MCF 10A (cell line): ENCODE measurements at regions of chr3 and their contacts with region 1.

Region 1: DNA sequence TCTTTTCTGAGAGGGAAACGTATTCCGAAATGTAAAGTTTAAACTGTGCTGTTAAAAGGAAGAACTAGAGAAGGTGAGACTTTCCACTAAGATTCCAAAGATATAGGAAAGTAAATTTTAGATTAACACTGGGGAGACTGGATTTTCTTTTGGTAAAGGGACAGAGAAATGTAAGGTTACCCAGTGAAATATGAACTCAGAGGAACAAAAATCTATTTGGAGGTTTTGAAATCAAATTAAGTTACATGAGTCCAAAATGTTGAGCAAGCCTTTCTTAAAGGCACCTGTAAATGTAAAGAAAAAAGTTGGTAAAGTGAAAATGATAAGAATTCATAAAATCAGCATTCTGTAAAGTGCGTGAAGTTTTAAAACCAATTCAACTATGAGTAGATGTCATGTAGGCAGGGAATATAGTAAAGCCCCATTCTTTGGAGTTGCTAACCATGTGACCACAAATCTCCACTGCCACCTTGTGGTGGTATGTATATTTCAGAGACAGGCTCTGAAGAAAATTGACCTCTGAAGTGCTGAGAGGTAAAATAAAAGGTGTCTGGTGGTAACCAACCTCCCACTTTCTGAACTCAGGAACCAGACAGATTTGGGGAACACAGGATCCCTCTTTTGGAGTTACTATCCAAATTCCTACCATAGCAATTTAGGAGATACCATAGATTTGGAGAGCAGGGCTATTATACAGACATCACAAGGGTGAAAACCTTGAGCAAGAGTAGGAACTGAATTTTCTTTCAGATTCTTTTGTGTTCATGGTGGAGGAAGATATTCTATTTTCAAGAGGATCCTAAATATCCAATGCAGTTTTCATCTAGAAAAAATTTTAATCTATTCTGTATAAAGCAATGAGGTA is 215.3 kb downstream of the ROBO2 start:
- DNase-seq: peak; percentile 68
- H3K4me3 Mint-ChIP-seq: no peak overlapping the region
- H3K27ac Mint-ChIP-seq: no peak overlapping the region
- H3K4me1 Mint-ChIP-seq: no peaks in the 10 kb centered on the region
- H3K27me3 Mint-ChIP-seq: peaks cover 92% of the 10 kb centered on the region
- CTCF ChIP-seq: peak; percentile 55

Region 2: DNA sequence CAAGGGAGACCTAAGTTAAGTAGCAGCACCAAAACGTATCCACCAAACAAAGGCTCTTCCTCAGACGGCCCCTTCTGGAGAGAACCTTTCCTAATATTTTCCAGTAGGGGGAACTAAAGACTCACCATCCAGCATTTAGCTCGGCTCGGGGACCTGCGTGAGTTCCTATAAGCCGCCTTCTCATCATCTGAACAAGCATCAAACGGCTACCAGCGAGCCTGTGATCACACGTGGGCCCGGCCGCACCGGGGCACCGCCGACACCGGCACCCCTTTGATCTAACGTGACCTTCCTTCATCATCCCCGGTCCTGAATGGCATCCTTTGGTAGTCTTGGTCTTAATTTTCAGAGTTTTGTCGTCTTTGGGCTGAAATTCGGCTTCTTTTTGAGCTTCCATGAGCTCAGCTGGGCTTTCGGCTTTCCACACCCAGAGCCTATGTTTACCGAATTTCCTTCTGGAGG is 216.7 kb before region 1 on chr3:
- CTCF ChIA-PET with region 1: interaction called, 25 read pairs
- POLR2A ChIA-PET with region 1: interaction called, 4 read pairs
- intact Hi-C with region 1: loop called (anchors 1 kb)
- DNase-seq: peak; percentile 79
- H3K4me3 Mint-ChIP-seq: peak overlapping the region; percentile 61
- H3K27ac Mint-ChIP-seq: no peak overlapping the region
- H3K4me1 Mint-ChIP-seq: peaks cover 10% of the 10 kb centered on the region
- H3K27me3 Mint-ChIP-seq: peaks cover 90% of the 10 kb centered on the region
- CTCF ChIP-seq: peak; percentile 65

Region 3: GRCh38 chr3:77244981-77245380 is 10.2 kb before region 1 on chr3:
- CTCF ChIA-PET with region 1: interaction called, 11 read pairs
- POLR2A ChIA-PET with region 1: interaction called, 3 read pairs
- intact Hi-C with region 1: no loop called
- DNase-seq: no peak
- H3K4me3 Mint-ChIP-seq: no peak overlapping the region
- H3K27ac Mint-ChIP-seq: no peak overlapping the region
- H3K4me1 Mint-ChIP-seq: no peaks in the 10 kb centered on the region
- H3K27me3 Mint-ChIP-seq: peaks cover 69% of the 10 kb centered on the region
- CTCF ChIP-seq: no peak